Prostate gland (tissue), 2 donors: ENCODE measurements at regions of chr9 and their contacts with region 1.

Region 1: GRCh38 chr9:14030375-14031059 is 283.4 kb downstream of the NFIB start:
- DNase-seq: peak; percentile 48
- H3K4me3 ChIP-seq: peak overlapping the region in 1 of 2 donors; percentile 4
- H3K27ac ChIP-seq: peak overlapping the region; percentile 66 to 80
- H3K4me1 ChIP-seq: peaks cover 11% of the 10 kb centered on the region
- H3K27me3 ChIP-seq: no peaks in the 10 kb centered on the region
- CTCF ChIP-seq: no peak
- POLR2A ChIP-seq: no peak

Region 2: DNA sequence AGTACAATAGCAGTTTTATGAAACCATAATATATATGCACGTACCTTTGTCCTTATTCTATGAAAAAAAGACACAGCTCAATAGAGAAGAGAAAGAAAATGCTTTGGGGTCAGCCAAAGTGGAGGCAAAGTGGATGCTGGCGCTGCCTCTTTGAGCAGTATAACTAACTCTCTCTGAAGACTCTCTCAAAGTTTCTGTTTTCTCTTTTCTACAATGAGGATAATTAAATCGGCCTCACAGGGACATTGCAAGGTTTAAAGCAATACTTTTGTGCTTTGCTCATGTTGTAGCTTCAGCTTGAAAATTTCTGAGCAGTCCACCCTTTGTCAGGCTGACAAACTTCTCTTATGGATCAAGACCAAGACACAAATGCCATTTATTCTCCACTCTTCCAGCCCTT is 295.9 kb before region 1 on chr9:
- intact Hi-C with region 1: no loop called
- DNase-seq: no peak
- H3K4me3 ChIP-seq: no peak overlapping the region
- H3K27ac ChIP-seq: no peak overlapping the region
- H3K4me1 ChIP-seq: no peaks in the 10 kb centered on the region
- H3K27me3 ChIP-seq: no peaks in the 10 kb centered on the region
- CTCF ChIP-seq: no peak
- POLR2A ChIP-seq: no peak

Region 3: GRCh38 chr9:13942695-13943094 is 87.8 kb before region 1 on chr9:
- intact Hi-C with region 1: no loop called
- DNase-seq: no peak
- H3K4me3 ChIP-seq: no peak overlapping the region
- H3K27ac ChIP-seq: no peak overlapping the region
- H3K4me1 ChIP-seq: no peaks in the 10 kb centered on the region
- H3K27me3 ChIP-seq: no peaks in the 10 kb centered on the region
- CTCF ChIP-seq: no peak
- POLR2A ChIP-seq: no peak

Region 4: DNA sequence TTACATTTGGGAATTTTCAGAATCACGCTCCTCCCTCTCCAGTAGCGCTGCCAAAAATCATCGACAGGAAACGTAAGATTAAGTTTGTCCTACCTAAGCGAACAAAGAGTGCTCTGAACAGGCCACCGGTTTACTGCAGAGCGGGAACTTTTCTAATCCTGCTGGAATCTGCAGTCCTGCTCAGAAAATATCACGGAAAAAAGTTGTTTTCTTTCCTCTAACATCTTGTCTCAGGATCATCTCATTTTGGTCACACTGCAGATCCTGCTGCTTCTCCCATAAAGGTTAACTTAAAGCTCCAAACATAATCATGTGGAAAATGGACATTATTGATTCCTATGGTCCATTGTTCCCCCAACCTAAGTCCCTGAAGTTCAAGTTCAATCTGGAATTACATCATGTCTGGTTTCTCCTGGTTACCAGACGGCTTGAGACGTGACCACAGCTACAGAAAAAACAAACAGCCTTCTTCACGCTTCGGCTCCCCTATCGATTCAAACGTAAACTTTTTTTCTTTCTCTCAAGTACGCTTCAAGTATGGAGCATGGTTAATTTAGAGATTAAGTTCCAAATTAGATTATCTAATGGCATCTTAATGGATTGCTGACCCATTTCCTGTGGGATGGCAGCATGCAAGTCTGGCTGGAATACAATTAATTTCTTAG is 65.9 kb after region 1 on chr9:
- intact Hi-C with region 1: loop called (anchors 2 kb)
- DNase-seq: peak; percentile 40
- H3K4me3 ChIP-seq: peak overlapping the region in 1 of 2 donors; percentile 5
- H3K27ac ChIP-seq: peak overlapping the region; percentile 69 to 71
- H3K4me1 ChIP-seq: peaks cover 3% of the 10 kb centered on the region
- H3K27me3 ChIP-seq: no peaks in the 10 kb centered on the region
- CTCF ChIP-seq: no peak
- POLR2A ChIP-seq: no peak